GM10248 (cell line): ENCODE measurements at regions of chr2 and their contacts with region 1.

Region 1: GRCh38 chr2:197168705-197169104 is 141.9 kb downstream of the ANKRD44 start:
- DNase-seq: peak; percentile 61
- CTCF ChIP-seq: peak; percentile 70

Region 2: GRCh38 chr2:197137231-197137630 is 31.5 kb before region 1 on chr2:
- CTCF ChIA-PET with region 1: interaction called, 12 read pairs
- POLR2A ChIA-PET with region 1: no interaction called
- DNase-seq: no peak
- CTCF ChIP-seq: no peak

Region 3: DNA sequence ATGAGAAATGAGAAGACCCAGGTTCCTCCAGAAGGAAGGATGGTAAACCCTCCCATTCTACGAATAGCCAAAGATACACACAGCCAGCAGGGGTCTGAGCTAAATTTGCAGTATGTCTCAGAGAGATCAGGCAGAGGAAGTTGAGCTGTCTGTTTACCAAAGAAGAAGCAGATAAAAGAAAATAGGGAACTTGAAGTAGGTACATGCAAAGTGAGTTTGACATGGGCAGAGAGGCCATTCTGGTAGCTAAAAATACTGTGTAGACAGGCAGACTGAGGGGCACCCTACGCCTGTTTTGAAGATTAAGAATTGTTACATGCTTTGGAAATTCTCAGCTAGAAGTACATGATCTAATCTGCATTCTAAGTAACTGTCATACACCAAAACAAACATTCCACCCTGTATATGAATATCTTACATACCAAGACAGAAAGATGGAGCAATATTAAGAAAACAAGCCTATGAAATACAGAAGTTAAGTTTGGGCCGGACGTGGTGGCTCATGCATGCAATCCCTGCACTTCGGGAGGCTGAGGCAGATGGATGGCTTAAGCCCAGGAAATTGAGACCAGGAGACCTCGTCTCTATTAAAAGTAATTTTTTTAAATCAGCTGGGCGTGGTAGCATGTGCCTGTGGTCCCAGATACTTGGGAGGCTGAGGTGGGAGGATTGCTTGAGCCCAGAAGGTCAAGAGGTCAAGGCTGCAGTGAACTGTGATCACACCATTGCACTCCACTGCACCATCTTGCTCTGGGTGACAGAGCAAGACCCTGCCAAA is 16.1 kb before region 1 on chr2:
- CTCF ChIA-PET with region 1: interaction called, 48 read pairs
- POLR2A ChIA-PET with region 1: no interaction called
- DNase-seq: peak; percentile 45
- CTCF ChIP-seq: peak; percentile 7

Region 4: DNA sequence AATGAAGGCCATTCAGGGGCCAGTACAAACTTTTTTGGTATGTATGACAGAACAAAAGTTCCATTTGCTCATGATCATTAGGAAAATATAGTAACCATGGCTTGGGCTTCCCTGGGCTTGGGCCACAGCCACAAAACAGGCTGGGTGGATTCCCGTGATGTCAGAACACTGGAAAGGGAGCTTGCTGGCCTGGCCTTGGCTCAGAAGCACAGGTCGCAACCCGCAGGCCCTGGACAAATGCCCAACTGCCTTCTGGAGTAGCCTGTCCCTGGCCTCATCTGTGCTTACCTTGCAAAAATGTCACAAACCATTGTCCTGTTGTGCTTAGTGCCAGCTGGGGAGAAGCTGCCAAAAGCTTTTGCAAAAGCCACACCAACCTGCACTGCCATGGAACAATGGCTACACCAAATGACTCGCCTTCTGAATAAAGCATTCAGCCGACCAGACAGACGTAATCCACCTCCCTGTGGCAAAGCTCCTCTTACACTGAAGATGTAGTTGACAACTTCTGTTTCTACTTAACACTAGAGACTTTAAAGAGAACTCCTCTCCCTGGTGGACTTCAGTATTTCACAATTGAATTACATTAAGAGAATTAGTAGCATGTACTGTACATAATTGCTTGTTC is 16.4 kb after region 1 on chr2:
- CTCF ChIA-PET with region 1: interaction called, 54 read pairs
- POLR2A ChIA-PET with region 1: no interaction called
- DNase-seq: no peak
- CTCF ChIP-seq: no peak

Region 5: GRCh38 chr2:197223451-197223850 is 54.7 kb after region 1 on chr2:
- CTCF ChIA-PET with region 1: no interaction called
- POLR2A ChIA-PET with region 1: no interaction called
- DNase-seq: no peak
- CTCF ChIP-seq: no peak